Activated CD8-positive, alpha-beta T cell treated with anti-CD3 and anti-CD28 coated beads for 36 hours (primary cell): ENCODE measurements at regions of chr3 and their contacts with region 1.

Region 1: GRCh38 chr3:14144423-14145075 is 19.7 kb downstream of the TMEM43 start:
- DNase-seq: peak; percentile 76
- ATAC-seq: peak; percentile 84
- H3K4me3 Mint-ChIP-seq: peak overlapping the region; percentile 38
- H3K27ac Mint-ChIP-seq: peak overlapping the region; percentile 87
- H3K4me1 Mint-ChIP-seq: peaks cover 43% of the 10 kb centered on the region
- H3K27me3 Mint-ChIP-seq: no peaks in the 10 kb centered on the region
- CTCF ChIP-seq: no peak

Region 2: DNA sequence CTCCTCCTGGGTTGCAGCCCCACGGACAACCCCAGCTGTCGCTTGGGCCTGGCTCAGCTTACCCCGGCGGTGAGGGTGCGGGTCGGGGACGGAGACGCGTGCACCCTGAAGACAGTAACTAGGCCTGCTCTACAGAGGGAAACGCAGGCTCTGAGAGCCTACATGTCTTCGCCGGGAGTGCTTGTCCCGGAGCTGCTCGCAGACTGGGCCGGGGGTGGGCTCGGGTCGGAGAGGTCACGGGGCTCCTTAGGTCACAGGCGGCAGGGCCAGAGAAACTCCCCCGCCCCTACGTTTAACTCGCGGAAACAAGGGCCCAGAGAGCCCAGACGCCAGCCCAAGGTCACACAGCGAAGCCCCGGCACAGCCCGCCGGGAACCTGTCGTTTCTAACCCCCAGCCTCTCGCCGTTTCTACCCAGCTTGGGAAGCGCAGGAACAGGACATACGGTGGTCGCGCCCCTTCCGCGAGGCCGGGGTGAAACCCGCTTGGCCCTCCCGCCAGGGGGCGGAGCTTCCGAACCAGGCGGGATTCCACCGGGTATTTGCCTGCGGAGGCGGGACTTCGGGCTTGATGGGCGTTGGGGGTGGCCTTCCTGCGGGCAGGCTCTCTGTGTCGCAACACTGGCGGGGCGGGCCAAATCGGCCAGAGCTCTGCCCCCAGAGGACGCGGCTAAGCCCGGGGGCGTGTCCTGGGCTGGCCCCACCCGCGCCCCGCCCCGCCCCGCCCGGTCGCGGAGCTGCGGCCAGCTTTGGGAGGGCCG is 664.8 kb before region 1 on chr3 and contains the start of gene HDAC11:
- CTCF ChIA-PET with region 1: no interaction called
- POLR2A ChIA-PET with region 1: no interaction called
- intact Hi-C with region 1: no loop called
- DNase-seq: peak; percentile 98
- ATAC-seq: peak; percentile 97
- H3K4me3 Mint-ChIP-seq: peak within 1 kb of the TSS; percentile 90
- H3K27ac Mint-ChIP-seq: peak within 1 kb of the TSS; percentile 89
- H3K4me1 Mint-ChIP-seq: peaks cover 20% of the 10 kb centered on the region
- H3K27me3 Mint-ChIP-seq: no peaks in the 10 kb centered on the region
- CTCF ChIP-seq: no peak
- total RNA-seq, gene HDAC11: 1.8 to 2.0 TPM

Region 3: GRCh38 chr3:14124615-14125190 is 19.8 kb before region 1 on chr3 and contains the starts of genes CHCHD4 and TMEM43:
- CTCF ChIA-PET with region 1: interaction called, 12 read pairs
- POLR2A ChIA-PET with region 1: interaction called, 23 read pairs
- intact Hi-C with region 1: loop called (anchors 2 kb)
- DNase-seq: peak; percentile 99
- ATAC-seq: peak; percentile 93
- H3K4me3 Mint-ChIP-seq: peak within 1 kb of the TSS; percentile 95
- H3K27ac Mint-ChIP-seq: peak within 1 kb of the TSS; percentile 93
- H3K4me1 Mint-ChIP-seq: peaks cover 51% of the 10 kb centered on the region
- H3K27me3 Mint-ChIP-seq: no peaks in the 10 kb centered on the region
- CTCF ChIP-seq: no peak
- total RNA-seq, gene CHCHD4: 27.6 to 30.2 TPM
- total RNA-seq, gene TMEM43: 19.7 to 20.2 TPM

Region 4: GRCh38 chr3:14133255-14133701 is 11.3 kb before region 1 on chr3:
- CTCF ChIA-PET with region 1: no interaction called
- POLR2A ChIA-PET with region 1: interaction called, 11 read pairs
- intact Hi-C with region 1: no loop called
- DNase-seq: no peak
- ATAC-seq: no peak
- H3K4me3 Mint-ChIP-seq: no peak overlapping the region
- H3K27ac Mint-ChIP-seq: no peak overlapping the region
- H3K4me1 Mint-ChIP-seq: peaks cover 1% of the 10 kb centered on the region
- H3K27me3 Mint-ChIP-seq: no peaks in the 10 kb centered on the region
- CTCF ChIP-seq: no peak

Region 5: GRCh38 chr3:14178247-14179113 is 33.9 kb after region 1 on chr3 and contains the starts of genes LSM3 and XPC:
- CTCF ChIA-PET with region 1: interaction called, 5 read pairs
- POLR2A ChIA-PET with region 1: interaction called, 4 read pairs
- intact Hi-C with region 1: loop called (anchors 5 kb)
- DNase-seq: peak; percentile 97
- ATAC-seq: peak; percentile 98
- H3K4me3 Mint-ChIP-seq: peak within 1 kb of the TSS; percentile 87
- H3K27ac Mint-ChIP-seq: peak within 1 kb of the TSS; percentile 96
- H3K4me1 Mint-ChIP-seq: peaks cover 57% of the 10 kb centered on the region
- H3K27me3 Mint-ChIP-seq: no peaks in the 10 kb centered on the region
- CTCF ChIP-seq: no peak
- total RNA-seq, gene LSM3: 20.0 to 20.5 TPM
- total RNA-seq, gene XPC: 23.5 to 24.8 TPM

Region 6: GRCh38 chr3:14253022-14253706 is 108.6 kb after region 1 on chr3:
- CTCF ChIA-PET with region 1: no interaction called
- POLR2A ChIA-PET with region 1: no interaction called
- intact Hi-C with region 1: no loop called
- DNase-seq: no peak
- ATAC-seq: no peak
- H3K4me3 Mint-ChIP-seq: no peak overlapping the region
- H3K27ac Mint-ChIP-seq: no peak overlapping the region
- H3K4me1 Mint-ChIP-seq: no peaks in the 10 kb centered on the region
- H3K27me3 Mint-ChIP-seq: no peaks in the 10 kb centered on the region
- CTCF ChIP-seq: no peak